Psoas muscle (tissue), 8 donors: ENCODE measurements at regions of chr10 and their contacts with region 1.

Region 1: DNA sequence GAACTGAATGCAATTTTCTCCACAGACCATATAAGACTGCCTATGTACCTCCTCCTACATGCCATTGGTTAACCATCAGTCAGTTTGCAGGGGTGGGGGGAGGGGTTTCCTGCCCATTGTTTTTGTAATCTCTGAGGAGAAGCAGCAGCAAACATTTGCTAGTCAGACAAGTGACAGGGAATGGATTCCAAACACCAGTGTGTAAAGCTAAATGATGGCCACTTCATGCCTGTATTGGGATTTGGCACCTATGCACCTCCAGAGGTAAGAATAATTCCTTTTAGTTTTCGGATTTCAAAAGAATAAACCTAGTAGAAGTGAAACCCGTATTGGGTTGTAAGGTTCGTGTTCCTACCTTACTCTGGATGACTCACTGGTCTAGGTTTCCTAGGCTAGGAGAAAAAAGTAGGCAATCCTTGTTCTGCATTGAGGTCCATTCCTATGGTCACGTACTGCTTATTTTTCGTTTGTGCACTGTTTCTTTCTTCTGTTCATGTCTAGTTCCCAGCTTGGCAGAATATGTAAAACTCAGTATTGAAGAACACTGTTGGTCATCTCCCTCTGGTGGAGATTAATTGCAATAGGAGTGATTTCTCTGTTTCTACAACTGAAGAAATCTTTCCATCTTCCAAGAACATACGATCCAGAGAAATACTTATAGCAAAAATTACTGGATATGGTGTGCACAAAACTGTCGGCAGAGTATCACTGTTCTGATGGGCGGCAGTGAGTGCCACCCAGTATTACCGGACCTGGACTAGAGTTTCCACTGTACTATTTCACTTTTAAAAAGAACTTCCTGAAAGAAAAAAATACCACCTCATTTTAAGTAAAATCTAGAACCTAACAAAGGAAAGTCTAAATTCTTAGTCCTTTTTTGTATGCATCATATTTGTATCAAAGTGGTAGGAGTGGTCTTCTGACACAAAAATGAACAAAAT is at the start of gene AKR1C3:
- DNase-seq: no peak
- ATAC-seq: peak; percentile 77 to 94 (median 82)
- H3K4me3 ChIP-seq: peak within 1 kb of the TSS; percentile 68
- H3K27ac ChIP-seq: peak within 1 kb of the TSS; percentile 73
- H3K4me1 ChIP-seq: no peaks in the 10 kb centered on the region
- H3K27me3 ChIP-seq: no peaks in the 10 kb centered on the region
- CTCF ChIP-seq: peak; percentile 73
- total RNA-seq, gene AKR1C3: 20.6 to 1,247 (median 39.8) TPM

Region 2: GRCh38 chr10:4028027-4028471 is 1066.5 kb before region 1 on chr10:
- intact Hi-C with region 1: no loop called
- DNase-seq: no peak
- ATAC-seq: no peak
- H3K4me3 ChIP-seq: no peak overlapping the region
- H3K27ac ChIP-seq: no peak overlapping the region
- H3K4me1 ChIP-seq: no peaks in the 10 kb centered on the region
- H3K27me3 ChIP-seq: no peaks in the 10 kb centered on the region
- CTCF ChIP-seq: no peak

Region 3: DNA sequence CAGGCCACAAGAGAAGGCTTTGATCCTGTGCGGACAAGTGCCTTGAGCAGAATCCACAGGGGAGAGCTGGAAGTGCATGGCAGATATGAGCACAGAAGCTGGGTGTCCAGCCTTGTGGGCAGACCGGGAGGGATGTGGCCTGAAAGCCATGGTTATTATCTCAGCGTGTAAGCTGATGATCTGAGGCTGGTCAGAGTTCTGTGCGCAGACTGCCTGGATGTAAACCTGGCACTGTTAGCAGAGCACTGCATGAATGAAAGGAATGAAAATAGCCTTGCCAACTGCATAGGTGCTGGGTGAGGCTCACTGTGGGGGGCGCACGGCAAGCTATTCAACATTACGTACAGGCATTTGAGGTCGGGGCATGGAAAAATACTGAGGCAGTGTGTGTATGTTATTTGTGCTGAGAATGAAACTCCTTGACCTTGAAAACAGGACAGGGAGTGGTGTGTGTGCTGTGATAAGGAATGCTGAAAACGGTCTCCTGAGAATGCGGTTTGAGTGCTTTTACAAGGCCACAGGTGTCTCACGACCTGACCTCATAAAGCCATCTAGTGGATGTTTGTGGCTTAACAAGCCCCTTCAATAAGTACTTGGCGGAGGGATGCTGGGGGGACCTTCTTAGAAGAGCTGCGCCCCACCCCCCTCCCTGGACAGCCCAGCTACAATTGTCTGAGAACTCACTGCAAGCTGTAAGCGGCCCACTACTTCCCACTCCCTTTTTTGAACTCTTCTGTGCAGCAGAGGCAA is 112.6 kb before region 1 on chr10:
- intact Hi-C with region 1: loop called in 1 of 2 experiments (anchors 10 kb)
- DNase-seq: no peak
- ATAC-seq: peak in 3 of 4 donors; percentile 24 to 66 (median 51)
- H3K4me3 ChIP-seq: no peak overlapping the region
- H3K27ac ChIP-seq: peak overlapping the region; percentile 9
- H3K4me1 ChIP-seq: no peaks in the 10 kb centered on the region
- H3K27me3 ChIP-seq: no peaks in the 10 kb centered on the region
- CTCF ChIP-seq: peak; percentile 41

Region 4: DNA sequence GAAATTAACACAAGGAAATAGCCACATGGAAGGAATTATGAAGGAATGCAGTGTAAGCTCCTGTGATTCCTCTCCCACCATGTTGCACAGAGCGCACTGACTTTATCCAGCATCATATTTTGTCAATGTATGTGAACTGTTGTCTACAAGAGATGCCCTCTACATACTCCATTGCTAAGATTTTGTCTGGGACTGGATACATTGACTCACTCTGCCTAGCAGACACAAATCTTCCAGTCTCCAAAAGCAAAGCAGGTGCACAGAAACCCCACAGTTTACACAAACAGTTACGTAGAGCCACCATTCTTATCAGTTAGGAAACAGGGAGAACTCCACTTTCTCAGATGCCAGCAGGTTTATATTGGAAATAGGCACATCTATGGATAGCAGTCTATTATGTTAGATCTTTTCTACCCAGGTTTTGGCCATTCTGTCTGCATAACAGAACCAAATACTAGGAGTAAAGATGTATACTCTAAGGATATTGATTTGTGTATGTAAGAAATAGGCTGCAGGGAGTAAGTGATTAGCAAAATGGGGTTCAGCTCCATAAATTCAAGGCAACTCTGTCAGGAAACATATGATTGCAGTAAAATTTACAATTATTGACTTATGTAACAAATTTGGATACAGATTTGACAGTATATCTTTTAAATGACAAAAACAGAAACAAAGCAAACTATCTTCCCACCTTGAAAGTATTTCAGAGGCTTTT is 92.4 kb before region 1 on chr10:
- intact Hi-C with region 1: loop called in 1 of 2 experiments (anchors 5 kb)
- DNase-seq: no peak
- ATAC-seq: no peak
- H3K4me3 ChIP-seq: peak overlapping the region; percentile 66
- H3K27ac ChIP-seq: peak overlapping the region; percentile 39
- H3K4me1 ChIP-seq: no peaks in the 10 kb centered on the region
- H3K27me3 ChIP-seq: no peaks in the 10 kb centered on the region
- CTCF ChIP-seq: no peak

Region 5: GRCh38 chr10:5014936-5015335 is 79.6 kb before region 1 on chr10:
- intact Hi-C with region 1: loop called (anchors 1 to 10 kb)
- DNase-seq: no peak
- ATAC-seq: peak in 3 of 4 donors; percentile 52 to 57 (median 52)
- H3K4me3 ChIP-seq: peak overlapping the region; percentile 50
- H3K27ac ChIP-seq: no peak overlapping the region
- H3K4me1 ChIP-seq: peaks cover 32% of the 10 kb centered on the region
- H3K27me3 ChIP-seq: no peaks in the 10 kb centered on the region
- CTCF ChIP-seq: peak; percentile 35

Region 6: GRCh38 chr10:5283305-5284158 is 189.0 kb after region 1 on chr10:
- intact Hi-C with region 1: loop called in 1 of 2 experiments (anchors 10 kb)
- DNase-seq: peak; percentile 63 to 64
- ATAC-seq: peak; percentile 82 to 92 (median 88)
- H3K4me3 ChIP-seq: no peak overlapping the region
- H3K27ac ChIP-seq: no peak overlapping the region
- H3K4me1 ChIP-seq: peaks cover 4% of the 10 kb centered on the region
- H3K27me3 ChIP-seq: peaks cover 0 to 1% (median 0%) of the 10 kb centered on the region in 3 donors
- CTCF ChIP-seq: peak; percentile 68